ENCODE measurements at regions of chr16 and their contacts with region 1.

Region 1: DNA sequence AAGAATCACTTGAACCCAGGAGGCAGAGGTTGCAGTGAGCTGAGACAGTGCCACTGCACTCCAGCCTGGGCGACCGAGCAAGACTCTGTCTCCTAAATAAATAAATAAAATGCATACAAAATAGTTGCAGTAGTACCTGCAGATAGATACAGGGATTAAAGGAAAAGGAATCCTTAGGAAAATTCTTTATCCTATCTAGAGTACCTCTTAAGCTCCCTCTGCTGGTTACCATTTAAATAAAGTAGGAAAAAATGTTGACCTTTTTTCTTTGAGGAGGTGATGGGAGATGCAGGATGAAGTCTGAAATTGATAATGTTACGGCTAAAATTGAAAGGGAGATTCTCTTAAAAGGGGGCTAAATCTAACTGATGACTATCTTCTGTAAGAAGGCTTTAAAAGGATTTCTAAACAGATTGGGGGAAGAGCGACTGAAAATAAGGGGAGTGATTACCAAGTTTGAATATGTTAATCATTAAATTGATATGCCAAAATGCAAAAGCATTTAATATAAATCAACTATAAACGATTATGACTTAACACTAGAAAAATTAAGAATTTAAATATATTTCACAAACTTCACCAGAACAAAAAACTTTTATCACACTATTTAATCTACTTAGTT is 29.4 kb downstream of the C16orf87 start:
- DNase-seq: no peak
- ATAC-seq: peak; percentile 70
- H3K4me3 ChIP-seq: no peak overlapping the region
- H3K27ac ChIP-seq: no peak overlapping the region
- H3K4me1 ChIP-seq: no peaks in the 10 kb centered on the region
- H3K27me3 ChIP-seq: no peaks in the 10 kb centered on the region
- CTCF ChIP-seq: peak; percentile 29 to 57 (median 43); a peak in 4 of 6 replicates
- POLR2A ChIP-seq: no peak
- RAD21 ChIP-seq: peak; percentile 29; the same call in 1 of the 2 replicates

Region 2: DNA sequence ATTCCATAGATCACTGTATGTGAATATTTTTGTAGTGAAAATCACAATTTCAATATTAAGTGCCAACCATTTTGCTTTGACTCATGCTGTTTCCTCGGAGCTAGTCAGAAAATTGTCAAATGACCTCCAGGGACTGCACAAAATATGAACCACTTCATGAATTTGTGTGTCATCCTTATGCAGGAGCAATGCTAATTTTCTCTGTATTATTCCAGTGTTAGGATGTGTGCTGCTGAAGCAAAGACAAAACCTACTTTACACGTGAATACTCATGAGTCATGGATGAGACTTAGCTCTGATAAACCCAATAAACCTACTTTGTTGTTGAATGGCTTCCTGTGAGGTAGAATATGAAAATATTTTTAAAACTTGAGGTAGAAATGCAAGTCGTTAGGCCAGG is 245.6 kb before region 1 on chr16:
- CTCF ChIA-PET with region 1: no interaction called
- POLR2A ChIA-PET with region 1: no interaction called
- RAD21 ChIA-PET with region 1: no interaction called
- intact Hi-C with region 1: loop called (anchors 10 kb)
- DNase-seq: no peak
- ATAC-seq: no peak
- H3K4me3 ChIP-seq: no peak overlapping the region
- H3K27ac ChIP-seq: no peak overlapping the region
- H3K4me1 ChIP-seq: no peaks in the 10 kb centered on the region
- H3K27me3 ChIP-seq: no peaks in the 10 kb centered on the region
- CTCF ChIP-seq: no peak
- POLR2A ChIP-seq: no peak
- RAD21 ChIP-seq: no peak

Region 3: GRCh38 chr16:46812781-46813540 is 11.4 kb after region 1 on chr16:
- CTCF ChIA-PET with region 1: interaction called, 11 read pairs
- POLR2A ChIA-PET with region 1: interaction called, 3 read pairs
- RAD21 ChIA-PET with region 1: no interaction called
- intact Hi-C with region 1: no loop called
- DNase-seq: no peak
- ATAC-seq: no peak
- H3K4me3 ChIP-seq: no peak overlapping the region
- H3K27ac ChIP-seq: no peak overlapping the region
- H3K4me1 ChIP-seq: peaks cover 9 to 12% of the 10 kb centered on the region in 2 experiments
- H3K27me3 ChIP-seq: no peaks in the 10 kb centered on the region
- CTCF ChIP-seq: no peak
- POLR2A ChIP-seq: no peak
- RAD21 ChIP-seq: no peak

Region 4: GRCh38 chr16:46822270-46822669 is 20.7 kb after region 1 on chr16:
- CTCF ChIA-PET with region 1: interaction called, 10 read pairs
- POLR2A ChIA-PET with region 1: no interaction called
- RAD21 ChIA-PET with region 1: no interaction called
- intact Hi-C with region 1: no loop called
- DNase-seq: no peak
- ATAC-seq: no peak
- H3K4me3 ChIP-seq: no peak overlapping the region
- H3K27ac ChIP-seq: no peak overlapping the region
- H3K4me1 ChIP-seq: peaks cover 11 to 14% of the 10 kb centered on the region in 2 experiments
- H3K27me3 ChIP-seq: no peaks in the 10 kb centered on the region
- CTCF ChIP-seq: no peak
- POLR2A ChIP-seq: no peak
- RAD21 ChIP-seq: no peak